ENCODE measurements at regions of chr4 and their contacts with region 1.

Region 1: GRCh38 chr4:40056716-40057585 is at the start of gene N4BP2:
- DNase-seq: peak; percentile 78
- H3K4me3 Mint-ChIP-seq: peak within 1 kb of the TSS; percentile 92
- H3K27ac Mint-ChIP-seq: peak within 1 kb of the TSS; percentile 98
- H3K4me1 Mint-ChIP-seq: peaks cover 32% of the 10 kb centered on the region
- H3K27me3 Mint-ChIP-seq: no peaks in the 10 kb centered on the region
- total RNA-seq, gene N4BP2: 19.3 to 21.9 TPM

Region 2: GRCh38 chr4:39527273-39528060 is 529.5 kb before region 1 on chr4 and contains the start of gene UGDH:
- CTCF ChIA-PET with region 1: no interaction called
- POLR2A ChIA-PET with region 1: no interaction called
- intact Hi-C with region 1: loop called (anchors 2 kb)
- DNase-seq: peak; percentile 94
- H3K4me3 Mint-ChIP-seq: peak within 1 kb of the TSS; percentile 99
- H3K27ac Mint-ChIP-seq: peak within 1 kb of the TSS; percentile 90
- H3K4me1 Mint-ChIP-seq: peaks cover 18% of the 10 kb centered on the region
- H3K27me3 Mint-ChIP-seq: no peaks in the 10 kb centered on the region
- total RNA-seq, gene UGDH: 28.7 to 32.9 TPM

Region 3: GRCh38 chr4:39697740-39698423 is 359.1 kb before region 1 on chr4 and contains the start of gene UBE2K:
- CTCF ChIA-PET with region 1: no interaction called
- POLR2A ChIA-PET with region 1: interaction called, 4 read pairs
- intact Hi-C with region 1: loop called (anchors 2 kb)
- DNase-seq: peak; percentile 92
- H3K4me3 Mint-ChIP-seq: peak within 1 kb of the TSS; percentile 96
- H3K27ac Mint-ChIP-seq: peak within 1 kb of the TSS; percentile 96
- H3K4me1 Mint-ChIP-seq: peaks cover 36% of the 10 kb centered on the region
- H3K27me3 Mint-ChIP-seq: no peaks in the 10 kb centered on the region
- total RNA-seq, gene UBE2K: 81.4 to 83.5 TPM

Region 4: DNA sequence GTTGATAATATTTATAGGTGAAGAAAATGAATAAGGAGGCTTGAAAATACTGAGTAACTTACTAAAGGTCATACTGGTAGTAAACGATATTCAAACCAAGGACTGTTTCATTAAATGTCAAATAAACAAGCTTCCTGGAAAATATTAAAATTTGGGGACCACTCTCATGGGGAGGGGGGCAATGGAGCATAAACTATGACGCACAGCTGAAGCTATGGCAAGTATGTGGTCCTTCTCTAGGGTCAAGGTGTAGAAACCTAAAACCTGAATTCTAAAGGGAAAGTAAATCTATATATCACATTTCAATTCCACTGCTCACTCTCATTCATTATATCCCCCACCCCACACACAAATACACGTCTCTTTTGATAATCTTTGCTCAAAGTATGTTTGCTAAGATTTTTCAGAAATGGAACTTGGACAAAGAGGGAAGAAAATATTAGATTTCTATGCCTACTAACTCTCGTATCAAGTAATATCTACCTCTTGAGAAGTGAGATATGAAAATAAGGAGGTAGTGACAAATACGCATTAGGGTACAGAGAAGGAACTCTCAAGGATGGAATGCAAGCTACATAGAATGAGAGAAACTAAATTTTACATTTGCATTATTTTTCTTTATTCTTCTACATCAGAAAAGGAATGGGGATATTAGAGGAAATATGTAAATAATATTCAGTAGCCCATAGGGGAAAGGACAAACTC is 163.8 kb before region 1 on chr4:
- CTCF ChIA-PET with region 1: no interaction called
- POLR2A ChIA-PET with region 1: no interaction called
- intact Hi-C with region 1: no loop called
- DNase-seq: no peak
- H3K4me3 Mint-ChIP-seq: no peak overlapping the region
- H3K27ac Mint-ChIP-seq: no peak overlapping the region
- H3K4me1 Mint-ChIP-seq: no peaks in the 10 kb centered on the region
- H3K27me3 Mint-ChIP-seq: no peaks in the 10 kb centered on the region

Region 5: GRCh38 chr4:39908284-39908683 is 148.7 kb before region 1 on chr4:
- CTCF ChIA-PET with region 1: no interaction called
- POLR2A ChIA-PET with region 1: no interaction called
- intact Hi-C with region 1: no loop called
- DNase-seq: no peak
- H3K4me3 Mint-ChIP-seq: no peak overlapping the region
- H3K27ac Mint-ChIP-seq: no peak overlapping the region
- H3K4me1 Mint-ChIP-seq: peaks cover 6% of the 10 kb centered on the region
- H3K27me3 Mint-ChIP-seq: no peaks in the 10 kb centered on the region

Region 6: GRCh38 chr4:39933671-39934590 is 123.0 kb before region 1 on chr4:
- CTCF ChIA-PET with region 1: no interaction called
- POLR2A ChIA-PET with region 1: no interaction called
- intact Hi-C with region 1: no loop called
- DNase-seq: no peak
- H3K4me3 Mint-ChIP-seq: no peak overlapping the region
- H3K27ac Mint-ChIP-seq: peak overlapping the region; percentile 62
- H3K4me1 Mint-ChIP-seq: peaks cover 68% of the 10 kb centered on the region
- H3K27me3 Mint-ChIP-seq: no peaks in the 10 kb centered on the region

Region 7: DNA sequence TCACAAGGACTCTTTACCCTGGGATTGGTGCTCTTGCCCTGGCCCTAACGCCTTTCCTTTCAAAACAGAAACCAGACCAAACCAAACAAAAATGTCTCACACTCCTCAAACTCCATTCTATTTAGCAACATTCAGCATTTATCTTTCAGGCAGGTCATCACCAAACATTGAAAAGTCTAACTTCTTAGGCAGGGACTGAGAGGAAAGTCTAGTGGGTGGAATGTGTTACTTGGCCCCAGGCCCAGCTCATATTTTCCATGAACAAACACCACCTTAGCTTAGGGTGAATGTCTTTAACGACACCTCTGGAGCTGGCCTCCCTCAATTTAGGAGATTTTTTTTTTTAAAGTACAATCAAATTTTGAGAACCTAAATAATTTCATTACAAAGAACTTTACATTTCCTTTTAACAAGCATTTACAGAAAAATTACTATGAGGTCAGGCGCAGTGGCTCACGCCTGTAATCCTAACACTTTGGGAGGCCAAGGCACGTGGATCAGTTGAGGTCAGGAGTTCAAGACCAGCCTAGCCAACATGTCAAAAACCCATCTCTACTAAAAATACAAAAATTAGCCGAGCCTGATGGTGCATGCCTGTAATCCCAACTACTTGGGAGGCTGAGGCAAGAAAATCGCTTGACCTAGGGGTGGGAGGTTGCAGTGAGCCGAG is 10.5 kb before region 1 on chr4:
- CTCF ChIA-PET with region 1: interaction called, 6 read pairs
- POLR2A ChIA-PET with region 1: interaction called, 7 read pairs
- intact Hi-C with region 1: loop called (anchors 1 kb)
- DNase-seq: peak; percentile 69
- H3K4me3 Mint-ChIP-seq: no peak overlapping the region
- H3K27ac Mint-ChIP-seq: peak overlapping the region; percentile 73
- H3K4me1 Mint-ChIP-seq: peaks cover 5% of the 10 kb centered on the region
- H3K27me3 Mint-ChIP-seq: no peaks in the 10 kb centered on the region

Region 8: GRCh38 chr4:40228497-40229365 is 171.8 kb after region 1 on chr4:
- CTCF ChIA-PET with region 1: no interaction called
- POLR2A ChIA-PET with region 1: interaction called, 4 read pairs
- intact Hi-C with region 1: loop called (anchors 5 kb)
- DNase-seq: peak; percentile 56
- H3K4me3 Mint-ChIP-seq: peak overlapping the region; percentile 58
- H3K27ac Mint-ChIP-seq: peak overlapping the region; percentile 92
- H3K4me1 Mint-ChIP-seq: peaks cover 93% of the 10 kb centered on the region
- H3K27me3 Mint-ChIP-seq: no peaks in the 10 kb centered on the region

Region 9: GRCh38 chr4:40325189-40326019 is 268.5 kb after region 1 on chr4:
- CTCF ChIA-PET with region 1: interaction called, 10 read pairs
- POLR2A ChIA-PET with region 1: no interaction called
- intact Hi-C with region 1: loop called (anchors 1 kb)
- DNase-seq: peak; percentile 75
- H3K4me3 Mint-ChIP-seq: no peak overlapping the region
- H3K27ac Mint-ChIP-seq: no peak overlapping the region
- H3K4me1 Mint-ChIP-seq: peaks cover 18% of the 10 kb centered on the region
- H3K27me3 Mint-ChIP-seq: no peaks in the 10 kb centered on the region

Region 10: GRCh38 chr4:40672536-40673526 is 615.9 kb after region 1 on chr4:
- CTCF ChIA-PET with region 1: no interaction called
- POLR2A ChIA-PET with region 1: no interaction called
- intact Hi-C with region 1: loop called (anchors 5 kb)
- DNase-seq: peak; percentile 71
- H3K4me3 Mint-ChIP-seq: peak overlapping the region; percentile 63
- H3K27ac Mint-ChIP-seq: peak overlapping the region; percentile 92
- H3K4me1 Mint-ChIP-seq: peaks cover 50% of the 10 kb centered on the region
- H3K27me3 Mint-ChIP-seq: no peaks in the 10 kb centered on the region

Region 11: GRCh38 chr4:40856822-40857362 is 799.9 kb after region 1 on chr4:
- CTCF ChIA-PET with region 1: no interaction called
- POLR2A ChIA-PET with region 1: no interaction called
- intact Hi-C with region 1: no loop called
- DNase-seq: peak; percentile 58
- H3K4me3 Mint-ChIP-seq: peak overlapping the region; percentile 53
- H3K27ac Mint-ChIP-seq: no peak overlapping the region
- H3K4me1 Mint-ChIP-seq: peaks cover 12% of the 10 kb centered on the region
- H3K27me3 Mint-ChIP-seq: peaks cover 36% of the 10 kb centered on the region

Measured in activated CD4-positive, alpha-beta memory T cell treated with anti-CD3 and anti-CD28 coated beads for 36 hours (primary cell).